A549 (cell line): ENCODE measurements at regions of chr15 and their contacts with region 1.

Region 1: GRCh38 chr15:69576035-69576526 is 123.5 kb downstream of the RPLP1 start:
- DNase-seq: peak; percentile 68 to 87
- ATAC-seq: peak; percentile 79 to 92
- H3K4me3 ChIP-seq: no peak overlapping the region
- H3K27ac ChIP-seq: peak overlapping the region; percentile 28 to 50; a peak in 4 of 6 replicates
- H3K4me1 ChIP-seq: peaks cover 37% of the 10 kb centered on the region; the same call in 2 of the 3 replicates
- CTCF ChIP-seq: peak; percentile 94
- EP300 ChIP-seq: no peak
- POLR2A ChIP-seq: no peak
- RAD21 ChIP-seq: peak; percentile 98

Region 2: GRCh38 chr15:69489073-69489571 is 87.0 kb before region 1 on chr15:
- CTCF ChIA-PET with region 1: no interaction called
- POLR2A ChIA-PET with region 1: no interaction called
- DNase-seq: no peak
- ATAC-seq: no peak
- H3K4me3 ChIP-seq: no peak overlapping the region
- H3K27ac ChIP-seq: no peak overlapping the region
- H3K4me1 ChIP-seq: no peaks in the 10 kb centered on the region
- CTCF ChIP-seq: no peak
- EP300 ChIP-seq: no peak
- POLR2A ChIP-seq: no peak
- RAD21 ChIP-seq: no peak

Region 3: GRCh38 chr15:69593981-69594966 is 18.2 kb after region 1 on chr15:
- CTCF ChIA-PET with region 1: interaction called, 53 read pairs
- POLR2A ChIA-PET with region 1: interaction called, 3 read pairs
- DNase-seq: peak; percentile 89 to 98
- ATAC-seq: peak; percentile 86 to 90
- H3K4me3 ChIP-seq: peak overlapping the region; percentile 17; the same call in 1 of the 3 replicates
- H3K27ac ChIP-seq: peak overlapping the region; percentile 63 to 73
- H3K4me1 ChIP-seq: peaks cover 50% of the 10 kb centered on the region
- CTCF ChIP-seq: no peak
- EP300 ChIP-seq: peak; percentile 53 to 69; a peak in 2 of 5 replicates
- POLR2A ChIP-seq: no peak
- RAD21 ChIP-seq: peak in 1 of 2 experiments; percentile 49; a peak in 3 of 5 replicates

Region 4: DNA sequence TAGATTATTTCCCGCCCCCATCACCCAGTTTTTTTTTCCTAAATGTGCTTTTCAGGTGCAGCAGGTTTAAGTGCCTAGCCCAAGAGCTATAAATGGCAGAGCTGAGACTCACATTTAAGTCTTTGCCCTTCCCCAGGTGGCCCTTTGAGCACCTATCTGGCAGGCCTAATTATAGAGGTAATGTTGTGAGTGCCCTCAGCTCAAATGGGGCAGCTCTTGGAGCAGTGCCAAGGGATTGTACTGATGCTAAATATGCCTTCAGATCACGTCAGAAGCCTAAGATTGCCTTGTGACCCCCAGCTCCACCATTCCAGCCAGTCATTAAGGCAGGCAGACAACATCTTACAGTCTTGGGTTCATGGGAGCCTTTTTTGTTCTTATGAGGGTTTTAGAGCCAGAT is 36.0 kb after region 1 on chr15:
- CTCF ChIA-PET with region 1: no interaction called
- POLR2A ChIA-PET with region 1: no interaction called
- DNase-seq: no peak
- ATAC-seq: no peak
- H3K4me3 ChIP-seq: no peak overlapping the region
- H3K27ac ChIP-seq: no peak overlapping the region
- H3K4me1 ChIP-seq: no peaks in the 10 kb centered on the region
- CTCF ChIP-seq: no peak
- EP300 ChIP-seq: no peak
- POLR2A ChIP-seq: no peak
- RAD21 ChIP-seq: no peak

Region 5: DNA sequence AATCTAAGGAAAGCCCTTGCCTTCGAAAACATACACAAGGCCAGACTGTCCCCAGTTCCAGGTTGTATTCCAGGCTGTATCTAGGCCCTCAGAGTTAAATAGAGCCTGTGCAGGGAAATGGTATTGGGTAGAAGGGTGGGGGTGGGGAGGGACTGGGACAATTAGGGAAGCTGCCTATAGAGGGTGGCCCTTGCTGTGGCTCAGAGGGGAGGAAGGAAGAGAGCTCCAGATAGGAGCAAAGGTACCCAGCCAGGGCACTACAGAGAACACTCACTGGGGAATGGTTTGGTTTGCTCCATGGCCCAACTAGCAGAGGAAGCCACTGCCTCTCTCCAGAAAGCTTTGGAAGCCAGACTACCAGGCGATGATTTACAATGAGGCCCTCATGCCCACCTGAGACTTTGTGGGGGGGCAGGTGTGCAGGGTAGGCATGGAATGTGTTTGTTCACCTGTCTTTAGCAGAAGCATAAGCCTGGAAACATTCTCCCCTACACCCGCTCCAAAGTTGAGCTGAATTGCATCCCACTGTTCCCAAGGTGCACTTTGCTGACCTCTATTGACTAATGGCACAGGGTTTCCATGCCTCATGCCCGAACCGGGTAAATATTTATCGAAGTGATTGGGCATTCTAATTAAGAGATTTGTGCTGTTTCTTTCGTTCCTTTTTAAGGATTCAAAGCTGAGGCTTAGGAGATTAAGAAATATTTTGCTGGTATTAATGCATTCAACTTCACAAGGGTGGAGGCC is 528.0 kb after region 1 on chr15:
- CTCF ChIA-PET with region 1: interaction called, 27 read pairs
- POLR2A ChIA-PET with region 1: no interaction called
- DNase-seq: no peak
- ATAC-seq: no peak
- H3K4me3 ChIP-seq: no peak overlapping the region
- H3K27ac ChIP-seq: no peak overlapping the region
- H3K4me1 ChIP-seq: peaks cover 26% of the 10 kb centered on the region
- CTCF ChIP-seq: no peak
- EP300 ChIP-seq: no peak
- POLR2A ChIP-seq: no peak
- RAD21 ChIP-seq: no peak